Activated naive CD4-positive, alpha-beta T cell treated with anti-CD3 and anti-CD28 coated beads for 36 hours (primary cell): ENCODE measurements at regions of chr15 and their contacts with region 1.

Region 1: GRCh38 chr15:76057332-76058000 is 2.3 kb upstream of the TMEM266 start:
- DNase-seq: peak; percentile 62
- H3K4me3 Mint-ChIP-seq: no peak overlapping the region
- H3K27ac Mint-ChIP-seq: no peak overlapping the region
- H3K4me1 Mint-ChIP-seq: peaks cover 29% of the 10 kb centered on the region
- H3K27me3 Mint-ChIP-seq: peaks cover 34% of the 10 kb centered on the region

Region 2: DNA sequence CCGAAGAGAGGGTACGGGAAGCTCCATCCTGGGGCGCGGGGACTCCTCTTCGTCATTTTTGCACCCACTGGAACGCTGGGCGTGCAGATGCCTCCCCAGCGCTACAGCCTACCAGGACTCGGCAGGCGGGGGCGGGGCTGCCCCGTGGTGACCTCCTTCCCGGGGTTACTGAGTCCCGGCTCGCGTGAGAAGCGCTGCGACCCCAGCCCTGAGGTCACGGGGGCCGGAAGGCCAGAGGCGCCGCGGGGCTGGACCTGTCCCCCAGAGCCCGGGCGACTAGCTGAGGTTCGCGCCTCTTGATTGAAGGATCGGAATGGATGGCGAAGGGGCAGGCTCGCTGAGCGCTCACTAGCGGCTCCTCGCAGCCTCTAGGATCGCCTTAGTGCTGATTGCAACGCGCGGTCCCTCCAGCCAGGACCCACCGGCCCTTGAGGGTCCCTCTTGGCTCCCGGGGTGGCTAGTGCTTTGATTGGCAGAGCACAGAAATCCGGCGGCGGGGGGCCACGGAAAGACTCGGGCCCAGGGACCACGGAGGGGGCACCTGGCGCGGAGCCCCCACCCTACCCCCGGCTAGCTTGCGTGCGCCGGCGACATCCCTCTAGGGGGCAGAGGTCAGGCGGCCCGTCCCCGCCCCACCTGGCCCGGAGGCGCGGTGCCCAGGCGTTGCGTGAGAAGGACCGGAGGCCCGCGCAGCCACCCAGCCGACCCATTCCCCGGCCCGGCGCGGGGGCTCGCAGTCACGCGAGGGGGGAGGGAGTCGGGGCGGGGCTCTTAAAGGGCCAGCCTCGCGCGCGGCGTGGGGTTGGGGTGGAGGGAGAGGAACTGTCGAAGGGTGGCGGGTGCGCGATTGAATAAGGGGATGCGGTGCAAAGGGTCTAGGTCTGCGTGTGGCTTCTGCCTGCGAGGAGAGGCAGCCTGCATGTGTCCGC is 1331.4 kb before region 1 on chr15:
- CTCF ChIA-PET with region 1: no interaction called
- intact Hi-C with region 1: no loop called
- DNase-seq: peak; percentile 63
- H3K4me3 Mint-ChIP-seq: peak overlapping the region; percentile 67
- H3K27ac Mint-ChIP-seq: no peak overlapping the region
- H3K4me1 Mint-ChIP-seq: peaks cover 11% of the 10 kb centered on the region
- H3K27me3 Mint-ChIP-seq: peaks cover 21% of the 10 kb centered on the region

Region 3: GRCh38 chr15:75723847-75724660 is 333.4 kb before region 1 on chr15:
- CTCF ChIA-PET with region 1: no interaction called
- intact Hi-C with region 1: loop called (anchors 10 kb)
- DNase-seq: peak; percentile 54
- H3K4me3 Mint-ChIP-seq: no peak overlapping the region
- H3K27ac Mint-ChIP-seq: no peak overlapping the region
- H3K4me1 Mint-ChIP-seq: peaks cover 6% of the 10 kb centered on the region
- H3K27me3 Mint-ChIP-seq: peaks cover 8% of the 10 kb centered on the region

Region 4: DNA sequence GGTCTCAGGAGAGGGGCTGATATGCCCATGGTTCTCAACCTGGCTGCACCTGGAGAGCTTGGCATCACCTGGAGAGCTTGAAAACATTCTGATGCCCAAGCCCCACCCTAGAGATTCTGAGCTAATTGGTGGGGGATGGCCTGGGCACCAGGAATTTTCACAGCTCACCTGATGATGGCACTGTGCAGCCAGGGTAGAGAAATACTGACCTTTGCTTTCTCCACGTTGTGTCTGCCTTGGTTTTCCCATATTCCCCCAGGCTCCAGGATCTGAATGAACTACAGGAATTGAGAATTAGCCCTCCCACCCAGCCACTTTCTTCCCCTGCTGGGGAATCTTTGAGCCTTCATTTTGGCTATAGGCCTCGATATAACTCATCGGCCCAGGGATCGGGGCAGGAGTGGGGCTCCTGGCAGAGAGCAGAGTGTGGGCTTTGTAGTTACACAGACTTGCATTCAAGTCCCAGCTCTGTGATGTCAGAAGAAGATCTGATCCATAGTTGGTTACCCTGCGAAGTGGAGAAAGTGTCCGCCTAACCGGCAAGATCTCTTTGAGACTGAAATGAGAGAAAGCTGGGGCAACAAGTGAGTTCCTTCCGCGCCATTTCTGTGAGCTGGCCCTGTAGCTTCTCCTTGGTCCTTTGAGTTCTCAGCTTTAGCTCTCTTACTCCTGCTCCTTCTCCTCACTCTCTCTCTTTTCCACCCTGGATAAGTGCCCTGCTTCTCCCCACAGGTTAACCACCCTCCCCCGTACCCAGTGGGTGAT is 247.3 kb before region 1 on chr15:
- CTCF ChIA-PET with region 1: interaction called, 4 read pairs
- intact Hi-C with region 1: loop called (anchors 1 kb)
- DNase-seq: peak; percentile 31
- H3K4me3 Mint-ChIP-seq: no peak overlapping the region
- H3K27ac Mint-ChIP-seq: no peak overlapping the region
- H3K4me1 Mint-ChIP-seq: no peaks in the 10 kb centered on the region
- H3K27me3 Mint-ChIP-seq: no peaks in the 10 kb centered on the region